ENCODE measurements at regions of chr1 and their contacts with region 1.

Region 1: GRCh38 chr1:220810179-220810653 is 23.5 kb downstream of the MTARC1 start:
- DNase-seq: peak; percentile 73
- H3K4me3 ChIP-seq: no peak overlapping the region
- H3K27ac ChIP-seq: peak overlapping the region in 2 of 4 donors; percentile 26 to 36
- H3K4me1 ChIP-seq: peaks cover 0 to 19% (median 4%) of the 10 kb centered on the region in 4 donors
- H3K27me3 ChIP-seq: no peaks in the 10 kb centered on the region
- CTCF ChIP-seq: peak; percentile 80 to 88 (median 84)
- EP300 ChIP-seq: no peak
- POLR2A ChIP-seq: no peak

Region 2: DNA sequence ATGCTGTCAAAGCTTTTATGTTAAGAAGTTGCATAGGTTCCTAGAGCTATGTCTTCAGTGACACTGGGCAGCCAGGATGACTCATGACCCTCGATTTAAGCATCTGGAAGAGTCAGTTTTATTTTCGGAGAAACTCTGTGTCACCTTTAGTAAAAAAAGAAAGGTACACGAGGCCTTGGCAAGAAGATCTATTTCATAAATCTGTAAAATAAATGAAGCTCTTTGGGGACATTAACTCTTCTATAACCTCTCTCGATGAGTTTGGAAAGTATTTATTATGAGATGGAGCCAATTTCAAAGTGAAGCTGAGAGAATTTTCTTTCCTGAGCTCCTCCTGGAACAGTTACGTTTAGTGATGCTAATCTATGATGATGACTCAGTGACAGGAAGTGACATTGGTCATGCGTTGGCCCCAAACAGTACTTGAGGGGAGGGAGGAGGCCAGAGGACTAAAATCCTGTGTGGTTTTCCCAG is 225.5 kb after region 1 on chr1:
- in situ Hi-C with region 1: no loop called
- intact Hi-C with region 1: loop called (anchors 10 kb)
- DNase-seq: no peak
- H3K4me3 ChIP-seq: no peak overlapping the region
- H3K27ac ChIP-seq: peak overlapping the region in 1 of 4 donors; percentile 31
- H3K4me1 ChIP-seq: peaks cover 0 to 6% (median under 1%) of the 10 kb centered on the region in 4 donors
- H3K27me3 ChIP-seq: no peaks in the 10 kb centered on the region
- CTCF ChIP-seq: no peak
- EP300 ChIP-seq: no peak
- POLR2A ChIP-seq: no peak

Region 3: DNA sequence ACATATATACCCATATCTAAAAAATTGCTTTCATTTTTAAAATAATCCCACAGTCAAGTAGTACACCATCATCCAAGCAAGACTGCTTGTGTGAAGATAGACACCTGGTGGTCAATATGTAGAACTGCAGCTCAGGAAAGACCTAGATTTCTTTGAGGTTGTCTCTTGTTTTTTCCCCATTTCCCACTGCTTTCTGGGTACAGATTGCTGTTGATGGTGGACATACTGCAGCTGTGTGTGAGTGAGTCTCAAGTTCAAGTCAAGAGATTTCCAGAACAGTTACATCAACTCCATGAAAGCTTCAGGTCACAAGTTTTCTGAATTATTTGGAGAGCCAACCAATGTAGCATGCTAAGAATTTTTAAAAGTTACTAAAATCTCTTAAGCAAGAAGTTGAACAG is 625.3 kb after region 1 on chr1:
- in situ Hi-C with region 1: loop called in 2 of 4 experiments (anchors 25 kb)
- intact Hi-C with region 1: loop called (anchors 10 kb)
- DNase-seq: no peak
- H3K4me3 ChIP-seq: no peak overlapping the region
- H3K27ac ChIP-seq: no peak overlapping the region
- H3K4me1 ChIP-seq: peaks cover 3 to 22% (median 7%) of the 10 kb centered on the region in 4 donors
- H3K27me3 ChIP-seq: no peaks in the 10 kb centered on the region
- CTCF ChIP-seq: peak; percentile 76 to 96 (median 91)
- EP300 ChIP-seq: no peak
- POLR2A ChIP-seq: no peak